ENCODE measurements at regions of chr6 and their contacts with region 1.

Region 1: GRCh38 chr6:53651764-53652401 is 13.7 kb downstream of the KLHL31 start:
- DNase-seq: peak; percentile 59 to 83
- H3K4me3 ChIP-seq: peak overlapping the region; percentile 34 to 82 (median 67)
- H3K27ac ChIP-seq: no peak overlapping the region
- H3K4me1 ChIP-seq: peaks cover 0 to 2% (median 0%) of the 10 kb centered on the region in 4 experiments; a peak in 2 of 7 replicates
- H3K27me3 ChIP-seq: peaks cover 8 to 16% (median 12%) of the 10 kb centered on the region in 4 experiments
- CTCF ChIP-seq: peak; percentile 21 to 29 (median 26)
- EP300 ChIP-seq: no peak
- POLR2A ChIP-seq: peak in 1 of 2 experiments; percentile 42; a peak in 2 of 3 replicates
- RAD21 ChIP-seq: peak in 1 of 2 experiments; percentile 29; a peak in 1 of 4 replicates

Region 2: DNA sequence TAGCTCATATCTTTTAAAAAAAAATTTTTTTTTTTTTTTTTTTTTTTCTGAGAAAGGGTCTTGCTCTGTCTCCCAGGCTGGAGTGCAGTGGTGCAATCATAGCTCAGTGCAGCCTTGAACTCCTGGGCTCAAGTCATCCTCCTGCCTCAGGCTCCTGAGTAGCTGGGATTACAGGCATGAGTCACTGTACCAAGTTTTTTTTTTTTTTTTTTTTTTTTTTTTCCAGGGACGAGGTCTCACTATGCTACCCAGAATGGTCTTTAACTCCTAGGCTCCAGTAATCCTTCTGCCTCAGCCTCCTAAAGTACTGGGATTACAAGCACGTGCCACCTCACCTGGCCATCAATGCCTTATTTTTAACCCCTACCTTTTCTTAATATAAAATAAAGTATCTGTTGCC is 134.8 kb before region 1 on chr6:
- CTCF ChIA-PET with region 1: interaction called, 18 read pairs
- POLR2A ChIA-PET with region 1: interaction called, 3 read pairs
- DNase-seq: no peak
- H3K4me3 ChIP-seq: no peak overlapping the region
- H3K27ac ChIP-seq: no peak overlapping the region
- H3K4me1 ChIP-seq: no peaks in the 10 kb centered on the region
- H3K27me3 ChIP-seq: no peaks in the 10 kb centered on the region
- CTCF ChIP-seq: no peak
- EP300 ChIP-seq: no peak
- POLR2A ChIP-seq: no peak
- RAD21 ChIP-seq: no peak

Region 3: GRCh38 chr6:53544470-53545308 is 107.2 kb before region 1 on chr6 and contains the start of gene GCLC:
- CTCF ChIA-PET with region 1: interaction called, 4 read pairs
- POLR2A ChIA-PET with region 1: interaction called, 11 read pairs
- DNase-seq: peak; percentile 89 to 93
- H3K4me3 ChIP-seq: peak within 1 kb of the TSS; percentile 57 to 95 (median 80)
- H3K27ac ChIP-seq: peak within 1 kb of the TSS; percentile 83; the same call in 1 of the 2 replicates
- H3K4me1 ChIP-seq: peaks cover 3 to 16% (median 7%) of the 10 kb centered on the region in 4 experiments; a peak in 5 of 7 replicates
- H3K27me3 ChIP-seq: peaks cover 0 to 12% (median 8%) of the 10 kb centered on the region in 4 experiments; a peak in 5 of 7 replicates
- CTCF ChIP-seq: peak; percentile 55 to 81 (median 70)
- EP300 ChIP-seq: no peak; a peak in 1 of 3 replicates
- POLR2A ChIP-seq: peak; percentile 53 to 80
- RAD21 ChIP-seq: peak; percentile 56 to 82
- total RNA-seq, gene GCLC: 52.9 and 54.0 TPM in 2 replicates

Region 4: DNA sequence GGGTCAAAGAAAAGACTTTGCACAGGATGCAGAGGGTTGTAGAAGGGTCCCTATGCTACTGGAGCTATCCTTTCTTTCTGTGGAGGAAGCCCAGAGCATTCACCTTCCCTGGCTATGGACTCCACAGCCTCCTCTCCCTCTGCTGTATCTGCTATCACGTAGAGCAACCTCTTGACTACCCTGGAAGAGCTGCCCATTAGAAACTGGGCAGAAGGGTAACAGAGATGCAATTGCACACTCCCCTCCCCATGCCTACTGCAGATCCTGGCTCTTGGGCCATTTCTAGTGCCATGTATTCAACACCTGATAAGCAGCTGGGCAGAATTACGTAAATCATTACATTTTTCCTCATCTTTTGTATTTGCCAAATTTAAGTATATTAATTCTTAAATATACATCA is 10.6 kb after region 1 on chr6:
- CTCF ChIA-PET with region 1: interaction called, 26 read pairs
- POLR2A ChIA-PET with region 1: interaction called, 3 read pairs
- DNase-seq: no peak
- H3K4me3 ChIP-seq: no peak overlapping the region
- H3K27ac ChIP-seq: no peak overlapping the region
- H3K4me1 ChIP-seq: no peaks in the 10 kb centered on the region
- H3K27me3 ChIP-seq: no peaks in the 10 kb centered on the region
- CTCF ChIP-seq: no peak
- EP300 ChIP-seq: no peak
- POLR2A ChIP-seq: no peak
- RAD21 ChIP-seq: no peak

Measured in H1 (cell line).